OCI-LY7 (cell line): ENCODE measurements at regions of chr12 and their contacts with region 1.

Region 1: DNA sequence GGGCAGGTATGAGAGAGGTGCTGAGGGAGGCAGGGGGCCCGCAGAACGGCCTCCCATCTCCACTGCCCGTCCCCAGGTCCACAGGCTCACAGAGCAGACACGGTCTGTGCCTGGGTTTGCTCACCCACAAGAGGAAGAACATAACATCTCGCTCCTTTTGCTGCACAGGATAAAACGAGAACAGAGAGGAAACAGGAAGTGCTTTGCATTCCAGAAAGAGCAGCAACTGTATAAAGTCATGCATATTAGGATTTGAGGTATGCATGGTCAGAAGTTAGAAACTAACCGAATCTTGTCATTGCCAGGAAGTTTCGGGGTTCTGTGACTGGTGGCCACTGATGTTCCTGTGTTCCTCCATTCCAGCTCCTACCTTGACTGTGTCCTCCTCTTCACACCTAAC is 25.0 kb downstream of the NTF3 start:
- DNase-seq: peak; percentile 83
- H3K4me3 ChIP-seq: peak overlapping the region; percentile 57
- H3K27ac ChIP-seq: peak overlapping the region; percentile 87
- H3K4me1 ChIP-seq: peaks cover 50% of the 10 kb centered on the region
- CTCF ChIP-seq: no peak

Region 2: DNA sequence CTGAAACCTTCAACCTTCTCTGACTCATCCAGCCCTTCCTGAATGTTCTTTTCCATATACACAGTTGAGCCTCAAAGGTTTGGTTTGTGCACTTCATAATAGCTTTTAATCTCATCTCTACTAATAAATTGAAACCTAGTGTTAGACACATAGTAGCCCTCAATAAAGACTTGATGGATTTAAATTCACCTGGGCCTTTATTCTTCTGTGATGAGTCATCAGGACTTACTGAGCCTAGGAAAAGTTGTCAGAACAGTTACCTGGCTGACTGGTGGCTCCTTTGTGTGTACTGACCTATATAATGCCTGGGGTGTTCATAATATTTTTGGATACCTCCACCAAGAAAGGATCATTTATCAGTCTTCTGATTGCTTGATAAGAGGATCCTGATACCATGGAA is 111.4 kb before region 1 on chr12:
- CTCF ChIA-PET with region 1: interaction called, 13 read pairs
- POLR2A ChIA-PET with region 1: no interaction called
- intact Hi-C with region 1: no loop called
- DNase-seq: no peak
- H3K4me3 ChIP-seq: no peak overlapping the region
- H3K27ac ChIP-seq: no peak overlapping the region
- H3K4me1 ChIP-seq: no peaks in the 10 kb centered on the region
- CTCF ChIP-seq: no peak

Region 3: DNA sequence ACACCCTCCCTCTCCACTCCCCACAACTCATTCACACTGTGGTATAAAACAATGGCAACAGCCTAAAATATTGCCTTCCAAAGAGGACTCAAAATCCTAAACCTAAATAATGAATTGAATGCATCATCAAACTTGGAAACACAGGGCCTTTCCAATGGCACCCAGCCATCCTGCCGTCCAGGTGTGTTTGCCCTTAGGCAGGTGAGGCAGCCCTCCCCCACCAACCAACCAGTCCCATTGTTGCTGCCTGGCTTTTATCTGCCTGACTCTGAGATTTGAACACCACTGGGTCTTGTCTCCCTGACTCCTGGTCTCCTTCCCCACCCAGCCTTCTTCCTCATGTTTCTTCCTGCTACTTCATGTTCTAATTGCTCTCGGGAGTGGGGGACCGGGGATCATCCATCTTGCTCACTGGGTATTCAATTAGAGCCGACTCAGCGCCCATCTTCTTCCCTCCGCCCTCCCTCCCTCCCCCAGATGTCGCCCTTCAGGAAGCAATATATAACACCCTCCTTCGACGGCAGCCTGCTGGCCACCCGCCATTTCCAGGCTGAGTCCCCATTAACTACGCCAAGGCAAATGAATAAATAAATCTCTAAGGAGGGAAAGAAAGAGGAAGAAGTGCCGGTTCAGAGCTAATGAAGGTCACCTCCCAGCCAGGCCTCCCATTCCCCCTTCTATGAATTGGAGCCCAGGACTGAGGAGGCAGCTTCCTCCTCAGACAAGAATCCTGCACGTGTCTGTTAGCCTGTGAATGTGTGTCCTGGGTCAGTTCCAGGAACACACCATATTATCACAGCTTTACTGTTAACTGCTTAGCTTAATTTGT is 61.2 kb before region 1 on chr12:
- CTCF ChIA-PET with region 1: no interaction called
- POLR2A ChIA-PET with region 1: no interaction called
- intact Hi-C with region 1: no loop called
- DNase-seq: no peak
- H3K4me3 ChIP-seq: no peak overlapping the region
- H3K27ac ChIP-seq: no peak overlapping the region
- H3K4me1 ChIP-seq: no peaks in the 10 kb centered on the region
- CTCF ChIP-seq: no peak

Region 4: GRCh38 chr12:5493018-5493417 is 36.1 kb after region 1 on chr12:
- CTCF ChIA-PET with region 1: no interaction called
- POLR2A ChIA-PET with region 1: no interaction called
- intact Hi-C with region 1: no loop called
- DNase-seq: no peak
- H3K4me3 ChIP-seq: no peak overlapping the region
- H3K27ac ChIP-seq: no peak overlapping the region
- H3K4me1 ChIP-seq: peaks cover 5% of the 10 kb centered on the region
- CTCF ChIP-seq: no peak